ENCODE measurements at regions of chr1 and their contacts with region 1.

Region 1: GRCh38 chr1:203526572-203526971 is 32.6 kb downstream of the OPTC start:
- DNase-seq: peak in 1 of 2 experiments; percentile 55
- H3K4me3 ChIP-seq: no peak overlapping the region
- H3K27ac ChIP-seq: peak overlapping the region; percentile 40
- H3K4me1 ChIP-seq: peaks cover 32% of the 10 kb centered on the region
- H3K27me3 ChIP-seq: no peaks in the 10 kb centered on the region
- CTCF ChIP-seq: no peak

Region 2: GRCh38 chr1:201748335-201748734 is 1778.2 kb before region 1 on chr1:
- CTCF ChIA-PET with region 1: no interaction called
- POLR2A ChIA-PET with region 1: no interaction called
- intact Hi-C with region 1: no loop called
- DNase-seq: peak; percentile 54 to 77
- H3K4me3 ChIP-seq: no peak overlapping the region
- H3K27ac ChIP-seq: peak overlapping the region; percentile 63
- H3K4me1 ChIP-seq: peaks cover 56% of the 10 kb centered on the region
- H3K27me3 ChIP-seq: no peaks in the 10 kb centered on the region
- CTCF ChIP-seq: no peak

Region 3: GRCh38 chr1:203127666-203128430 is 398.7 kb before region 1 on chr1 and contains the start of gene ADORA1:
- CTCF ChIA-PET with region 1: no interaction called
- POLR2A ChIA-PET with region 1: no interaction called
- intact Hi-C with region 1: no loop called
- DNase-seq: peak; percentile 52 to 66
- H3K4me3 ChIP-seq: peak within 1 kb of the TSS; percentile 80
- H3K27ac ChIP-seq: no peak within 1 kb of the TSS
- H3K4me1 ChIP-seq: peaks cover 54% of the 10 kb centered on the region
- H3K27me3 ChIP-seq: no peaks in the 10 kb centered on the region
- CTCF ChIP-seq: no peak
- total RNA-seq, gene ADORA1: 5.9 and 8.3 TPM in 2 replicates

Region 4: GRCh38 chr1:203424861-203425662 is 101.5 kb before region 1 on chr1:
- CTCF ChIA-PET with region 1: no interaction called
- POLR2A ChIA-PET with region 1: interaction called, 36 read pairs
- intact Hi-C with region 1: no loop called
- DNase-seq: no peak
- H3K4me3 ChIP-seq: no peak overlapping the region
- H3K27ac ChIP-seq: no peak overlapping the region
- H3K4me1 ChIP-seq: no peaks in the 10 kb centered on the region
- H3K27me3 ChIP-seq: peaks cover 76% of the 10 kb centered on the region
- CTCF ChIP-seq: no peak

Region 5: GRCh38 chr1:203549309-203549708 is 22.7 kb after region 1 on chr1:
- CTCF ChIA-PET with region 1: interaction called, 10 read pairs
- POLR2A ChIA-PET with region 1: interaction called, 3 read pairs
- intact Hi-C with region 1: no loop called
- DNase-seq: peak in 1 of 2 experiments; percentile 78
- H3K4me3 ChIP-seq: no peak overlapping the region
- H3K27ac ChIP-seq: no peak overlapping the region
- H3K4me1 ChIP-seq: peaks cover 86% of the 10 kb centered on the region
- H3K27me3 ChIP-seq: no peaks in the 10 kb centered on the region
- CTCF ChIP-seq: no peak

Region 6: GRCh38 chr1:203644661-203645495 is 118.3 kb after region 1 on chr1:
- CTCF ChIA-PET with region 1: interaction called, 11 read pairs
- POLR2A ChIA-PET with region 1: no interaction called
- intact Hi-C with region 1: no loop called
- DNase-seq: peak in 1 of 2 experiments; percentile 58
- H3K4me3 ChIP-seq: no peak overlapping the region
- H3K27ac ChIP-seq: peak overlapping the region; percentile 45
- H3K4me1 ChIP-seq: peaks cover 39% of the 10 kb centered on the region
- H3K27me3 ChIP-seq: no peaks in the 10 kb centered on the region
- CTCF ChIP-seq: no peak

Region 7: GRCh38 chr1:203843435-203843834 is 316.9 kb after region 1 on chr1:
- CTCF ChIA-PET with region 1: no interaction called
- POLR2A ChIA-PET with region 1: no interaction called
- intact Hi-C with region 1: no loop called
- DNase-seq: no peak
- H3K4me3 ChIP-seq: no peak overlapping the region
- H3K27ac ChIP-seq: no peak overlapping the region
- H3K4me1 ChIP-seq: no peaks in the 10 kb centered on the region
- H3K27me3 ChIP-seq: no peaks in the 10 kb centered on the region
- CTCF ChIP-seq: no peak